Common myeloid progenitor, CD34-positive (primary cell): ENCODE measurements at regions of chr2 and their contacts with region 1.

Region 1: DNA sequence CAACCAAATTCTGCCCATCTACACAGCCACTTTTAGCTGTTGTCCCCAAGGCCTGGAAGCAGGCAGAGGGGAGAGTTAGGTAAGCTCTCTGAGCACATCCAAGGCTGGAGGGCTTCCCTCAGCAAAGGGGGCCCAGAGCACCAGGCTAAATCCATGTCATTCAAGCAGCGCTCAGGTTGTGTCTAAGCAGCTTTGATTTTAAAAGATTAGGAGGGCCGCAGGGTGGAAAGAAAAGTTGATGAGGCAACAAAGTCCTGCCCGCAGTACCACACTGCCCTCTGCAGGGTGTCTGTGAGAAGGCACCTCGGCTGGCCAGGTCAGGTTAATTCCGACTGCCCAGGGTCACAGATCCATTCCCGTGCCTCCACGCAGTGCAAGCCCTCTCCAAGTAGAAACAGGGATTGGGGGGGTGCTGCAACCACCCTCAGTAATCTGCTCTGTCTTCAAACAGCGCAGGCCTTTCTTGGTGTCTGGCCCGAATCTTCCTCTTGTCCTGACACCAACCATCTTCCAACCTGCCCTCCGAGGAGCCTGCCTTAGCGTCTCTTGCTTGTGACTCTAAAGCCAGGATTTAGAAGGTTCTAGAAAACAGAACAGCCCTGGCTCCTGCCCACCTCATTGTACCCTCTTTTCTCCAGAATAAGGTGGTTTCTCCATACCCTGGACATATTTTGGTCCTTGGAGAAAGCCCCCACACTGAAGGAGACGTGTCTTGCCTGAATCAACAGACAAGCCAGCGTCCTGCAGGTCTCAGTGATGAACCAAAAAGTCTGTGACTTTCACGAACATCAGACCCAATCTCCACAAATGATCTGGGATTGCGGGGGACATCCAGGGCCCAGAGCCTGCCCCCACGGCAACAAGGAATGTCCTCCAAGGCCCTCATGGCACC is 289.2 kb downstream of the TNS1 start:
- DNase-seq: peak; percentile 49 to 73 (median 65)
- H3K4me3 ChIP-seq: no peak overlapping the region
- H3K27ac ChIP-seq: no peak overlapping the region
- H3K4me1 ChIP-seq: peaks cover 0 to 8% (median 2%) of the 10 kb centered on the region in 4 experiments
- H3K27me3 ChIP-seq: peaks cover 0 to 68% (median 24%) of the 10 kb centered on the region in 5 experiments

Region 2: GRCh38 chr2:216683846-216684507 is 1029.7 kb before region 1 on chr2:
- CTCF ChIA-PET with region 1: interaction called, 15 read pairs
- POLR2A ChIA-PET with region 1: no interaction called
- DNase-seq: peak in 2 of 3 donors; percentile 43 to 48
- H3K4me3 ChIP-seq: no peak overlapping the region
- H3K27ac ChIP-seq: no peak overlapping the region
- H3K4me1 ChIP-seq: no peaks in the 10 kb centered on the region
- H3K27me3 ChIP-seq: peaks cover 0 to 42% (median 10%) of the 10 kb centered on the region in 5 experiments

Region 3: DNA sequence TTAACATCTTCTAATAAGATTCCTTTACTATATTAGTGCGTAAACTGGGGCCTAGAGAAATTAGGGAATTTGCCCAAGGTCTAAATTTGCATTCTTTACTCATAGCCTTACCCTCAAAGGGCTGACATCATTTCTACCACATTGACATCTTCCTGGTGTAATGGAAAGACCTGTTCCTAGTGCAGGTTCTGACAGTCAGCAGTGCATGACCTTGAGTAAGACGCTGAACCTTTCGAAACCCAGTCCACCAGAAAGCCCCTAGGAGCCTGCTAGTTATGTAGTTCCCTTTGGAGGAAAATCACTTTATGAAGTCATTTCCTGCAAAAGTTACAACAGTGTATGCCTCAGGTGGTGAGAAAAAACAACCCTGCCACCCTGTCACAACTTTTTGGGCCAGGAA is 99.1 kb before region 1 on chr2:
- CTCF ChIA-PET with region 1: no interaction called
- POLR2A ChIA-PET with region 1: no interaction called
- DNase-seq: no peak
- H3K4me3 ChIP-seq: no peak overlapping the region
- H3K27ac ChIP-seq: no peak overlapping the region
- H3K4me1 ChIP-seq: peaks cover 0 to 10% (median 0%) of the 10 kb centered on the region in 4 experiments
- H3K27me3 ChIP-seq: no peaks in the 10 kb centered on the region

Region 4: GRCh38 chr2:217693363-217693762 is 20.3 kb before region 1 on chr2:
- CTCF ChIA-PET with region 1: no interaction called
- POLR2A ChIA-PET with region 1: no interaction called
- DNase-seq: no peak
- H3K4me3 ChIP-seq: no peak overlapping the region
- H3K27ac ChIP-seq: no peak overlapping the region
- H3K4me1 ChIP-seq: no peaks in the 10 kb centered on the region
- H3K27me3 ChIP-seq: no peaks in the 10 kb centered on the region